ENCODE measurements at regions of chr21 and their contacts with region 1.

Region 1: DNA sequence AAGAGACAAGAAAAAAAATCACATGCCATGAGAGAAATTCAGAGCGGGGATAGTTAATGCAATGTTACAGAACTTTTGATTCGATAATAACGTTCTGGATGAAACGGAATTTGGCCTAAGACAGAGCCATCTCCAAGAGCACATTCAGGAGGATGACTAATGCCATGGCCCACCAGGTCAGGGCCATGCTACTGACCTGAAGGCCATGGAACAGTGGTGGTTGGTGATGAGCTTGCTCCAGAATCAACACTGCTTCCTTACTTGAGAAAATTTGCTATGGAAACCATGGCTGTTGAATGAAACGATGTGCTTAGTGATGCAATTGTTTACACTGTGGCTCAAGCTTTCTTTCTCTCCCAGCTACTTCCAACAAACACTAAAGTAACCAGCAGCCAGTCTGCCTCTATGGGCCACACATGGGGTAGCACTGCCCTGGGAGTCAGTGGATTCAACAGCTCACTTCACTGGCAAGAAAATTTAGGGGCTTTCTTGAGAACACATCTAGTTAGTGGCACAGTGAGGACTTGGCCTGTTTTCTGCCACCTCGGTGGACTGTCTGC is 299.1 kb downstream of the PCP4 start:
- DNase-seq: no peak
- ATAC-seq: no peak

Region 2: GRCh38 chr21:40373754-40374153 is 207.4 kb after region 1 on chr21:
- intact Hi-C with region 1: no loop called
- DNase-seq: no peak
- ATAC-seq: no peak

Region 3: DNA sequence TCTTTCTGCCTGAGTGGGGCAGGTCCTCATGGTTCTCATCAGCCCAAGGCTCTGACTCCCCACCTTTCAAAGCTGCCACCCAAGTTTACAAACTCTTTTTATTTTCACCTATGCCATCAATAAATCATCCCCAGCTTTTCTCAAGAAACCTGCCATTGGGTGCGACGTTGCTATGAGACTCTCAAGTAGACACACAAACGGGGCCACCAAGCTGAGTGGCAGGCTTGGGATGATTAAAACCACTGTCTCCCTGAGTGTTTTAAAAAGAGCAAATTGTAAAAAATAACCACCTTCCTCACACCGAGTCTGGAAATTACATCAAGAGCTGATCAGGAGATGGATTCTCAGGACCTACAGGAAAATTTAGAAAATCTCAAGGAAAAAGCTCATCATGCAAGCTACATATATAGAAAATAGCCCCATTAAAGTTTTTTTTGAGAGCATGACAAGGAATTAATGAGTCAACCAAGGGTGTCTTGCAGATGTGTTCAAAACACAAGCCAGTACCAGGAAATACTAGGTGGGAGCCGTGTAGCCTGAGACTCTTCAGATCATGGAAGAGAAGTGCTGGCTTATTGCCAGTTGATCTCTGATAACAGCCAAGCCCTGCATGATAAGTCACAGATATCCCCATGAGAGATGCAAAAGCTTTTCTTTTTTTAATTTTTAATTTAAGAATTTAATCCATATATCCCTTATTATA is 843.2 kb after region 1 on chr21:
- intact Hi-C with region 1: loop called (anchors 10 kb)
- DNase-seq: no peak
- ATAC-seq: no peak